ENCODE measurements at regions of chr15 and their contacts with region 1.

Region 1: DNA sequence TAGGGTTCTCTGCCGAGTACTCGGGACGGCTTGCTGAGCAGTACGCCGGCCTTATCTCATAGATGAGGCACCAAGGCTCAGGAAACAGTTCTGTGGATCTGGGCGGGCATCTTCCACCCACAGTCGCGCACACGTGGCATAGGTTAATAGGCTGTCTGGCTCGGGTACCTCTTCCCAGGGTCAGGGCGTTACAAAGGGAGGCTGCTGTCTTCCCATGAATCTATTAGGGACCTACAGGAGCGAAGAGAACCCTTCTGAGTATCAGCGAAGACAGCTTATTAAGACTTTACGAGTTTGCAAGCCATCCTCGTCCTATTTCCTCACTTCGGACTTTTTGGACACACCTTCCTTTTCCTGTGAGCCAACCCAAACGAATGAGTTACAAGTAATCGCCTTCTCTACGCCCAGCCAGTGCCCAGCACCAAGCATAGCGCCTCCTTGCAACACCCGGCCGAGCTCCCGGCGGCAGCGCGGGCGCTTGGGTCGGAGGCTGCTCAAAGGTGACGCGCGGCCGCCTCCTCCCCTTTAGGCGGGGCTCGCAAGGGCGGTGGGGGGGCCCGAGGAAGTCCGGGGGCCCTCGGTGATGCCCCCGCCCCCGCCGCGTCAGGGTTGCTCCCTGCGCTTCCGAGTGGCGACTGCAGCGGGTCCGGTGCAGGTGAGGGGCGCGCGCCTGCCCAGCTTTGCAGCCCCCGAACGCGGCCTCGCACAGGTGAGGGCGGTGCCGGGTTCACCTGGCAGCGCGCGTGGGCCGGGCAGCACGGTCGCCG is at the start of gene MCTP2:
- DNase-seq: peak; percentile 92 to 97 (median 96)
- H3K4me3 ChIP-seq: peak within 1 kb of the TSS; percentile 87 to 96 (median 90)
- H3K27ac ChIP-seq: peak within 1 kb of the TSS; percentile 84 to 93
- H3K4me1 ChIP-seq: peaks cover 37 to 66% (median 58%) of the 10 kb centered on the region in 4 experiments
- H3K27me3 ChIP-seq: no peaks in the 10 kb centered on the region

Region 2: GRCh38 chr15:94263341-94264273 is 32.5 kb after region 1 on chr15:
- CTCF ChIA-PET with region 1: interaction called, 13 read pairs
- POLR2A ChIA-PET with region 1: no interaction called
- DNase-seq: peak in 1 of 3 donors; percentile 34
- H3K4me3 ChIP-seq: no peak overlapping the region
- H3K27ac ChIP-seq: no peak overlapping the region
- H3K4me1 ChIP-seq: peaks cover 18 to 53% (median 39%) of the 10 kb centered on the region in 4 experiments
- H3K27me3 ChIP-seq: no peaks in the 10 kb centered on the region

Measured in common myeloid progenitor, CD34-positive (primary cell).